ENCODE measurements at regions of chr3 and their contacts with region 1.

Region 1: GRCh38 chr3:170811928-170812591 is 57.9 kb downstream of the RPL22L1 start:
- DNase-seq: peak; percentile 86
- H3K4me3 ChIP-seq: no peak overlapping the region
- H3K27ac ChIP-seq: peak overlapping the region; percentile 51
- H3K4me1 ChIP-seq: peaks cover 35% of the 10 kb centered on the region
- H3K27me3 ChIP-seq: no peaks in the 10 kb centered on the region
- CTCF ChIP-seq: peak; percentile 80 to 92
- POLR2A ChIP-seq: no peak

Region 2: GRCh38 chr3:170307671-170308403 is 504.2 kb before region 1 on chr3:
- CTCF ChIA-PET with region 1: interaction called, 17 read pairs
- POLR2A ChIA-PET with region 1: no interaction called
- dilution Hi-C with region 1: no loop called
- intact Hi-C with region 1: loop called (anchors 1 kb)
- DNase-seq: no peak
- H3K4me3 ChIP-seq: no peak overlapping the region
- H3K27ac ChIP-seq: no peak overlapping the region
- H3K4me1 ChIP-seq: peaks cover 7% of the 10 kb centered on the region
- H3K27me3 ChIP-seq: no peaks in the 10 kb centered on the region
- CTCF ChIP-seq: no peak
- POLR2A ChIP-seq: no peak

Region 3: DNA sequence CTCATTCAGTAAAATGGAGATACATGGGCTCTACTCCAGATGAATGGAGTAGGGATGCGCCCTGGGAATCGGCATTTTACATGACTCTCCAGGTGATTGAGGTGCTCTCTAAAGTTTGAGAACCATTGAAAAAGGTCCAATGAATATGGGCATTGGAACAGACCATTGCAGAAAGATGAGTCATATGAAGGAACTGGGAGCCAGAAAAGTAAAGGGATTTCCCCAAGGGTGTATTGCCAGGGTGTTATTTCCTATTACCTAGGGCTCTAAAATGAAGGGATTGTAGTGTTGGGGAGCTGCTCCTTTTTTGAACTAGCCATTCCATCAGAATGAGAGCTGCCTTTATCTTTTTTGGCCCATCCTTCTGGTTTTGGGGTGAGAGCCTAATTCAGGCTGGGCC is 371.7 kb before region 1 on chr3:
- CTCF ChIA-PET with region 1: interaction called, 25 read pairs
- POLR2A ChIA-PET with region 1: no interaction called
- dilution Hi-C with region 1: loop called (anchors 10 kb)
- intact Hi-C with region 1: no loop called
- DNase-seq: peak; percentile 31
- H3K4me3 ChIP-seq: no peak overlapping the region
- H3K27ac ChIP-seq: no peak overlapping the region
- H3K4me1 ChIP-seq: peaks cover 13% of the 10 kb centered on the region
- H3K27me3 ChIP-seq: no peaks in the 10 kb centered on the region
- CTCF ChIP-seq: no peak
- POLR2A ChIP-seq: no peak

Region 4: DNA sequence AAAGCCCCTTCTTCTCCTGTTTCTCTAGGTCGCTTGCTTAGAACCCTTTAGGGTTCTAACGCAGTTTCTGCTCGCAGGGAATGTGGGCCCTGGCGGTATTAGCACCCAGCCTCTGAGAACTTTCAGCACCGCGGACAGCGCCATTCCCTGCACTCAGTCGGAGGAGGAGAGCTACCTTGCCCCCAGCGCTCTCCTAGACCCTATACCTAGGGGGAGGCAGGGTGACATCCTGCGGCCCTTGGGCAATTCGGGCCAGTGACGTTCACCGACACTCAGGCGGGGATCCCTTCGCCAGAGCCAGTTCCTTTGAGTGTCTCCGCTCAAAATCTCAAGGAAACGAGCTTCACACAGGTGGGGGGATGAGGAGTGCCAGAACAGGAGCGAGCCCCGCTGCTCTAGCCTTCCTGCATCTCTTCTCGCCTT is 227.5 kb before region 1 on chr3:
- CTCF ChIA-PET with region 1: interaction called, 66 read pairs
- POLR2A ChIA-PET with region 1: no interaction called
- dilution Hi-C with region 1: no loop called
- intact Hi-C with region 1: loop called (anchors 10 kb)
- DNase-seq: peak; percentile 56
- H3K4me3 ChIP-seq: peak overlapping the region in 2 of 3 experiments; percentile 34 to 38
- H3K27ac ChIP-seq: no peak overlapping the region
- H3K4me1 ChIP-seq: peaks cover 12% of the 10 kb centered on the region
- H3K27me3 ChIP-seq: peaks cover 25 to 33% of the 10 kb centered on the region in 2 experiments
- CTCF ChIP-seq: no peak
- POLR2A ChIP-seq: no peak

Region 5: GRCh38 chr3:170726976-170727661 is 84.9 kb before region 1 on chr3:
- CTCF ChIA-PET with region 1: interaction called, 12 read pairs
- POLR2A ChIA-PET with region 1: no interaction called
- dilution Hi-C with region 1: no loop called
- intact Hi-C with region 1: no loop called
- DNase-seq: peak; percentile 85
- H3K4me3 ChIP-seq: no peak overlapping the region
- H3K27ac ChIP-seq: peak overlapping the region; percentile 89
- H3K4me1 ChIP-seq: peaks cover 22% of the 10 kb centered on the region
- H3K27me3 ChIP-seq: no peaks in the 10 kb centered on the region
- CTCF ChIP-seq: no peak
- POLR2A ChIP-seq: no peak

Region 6: DNA sequence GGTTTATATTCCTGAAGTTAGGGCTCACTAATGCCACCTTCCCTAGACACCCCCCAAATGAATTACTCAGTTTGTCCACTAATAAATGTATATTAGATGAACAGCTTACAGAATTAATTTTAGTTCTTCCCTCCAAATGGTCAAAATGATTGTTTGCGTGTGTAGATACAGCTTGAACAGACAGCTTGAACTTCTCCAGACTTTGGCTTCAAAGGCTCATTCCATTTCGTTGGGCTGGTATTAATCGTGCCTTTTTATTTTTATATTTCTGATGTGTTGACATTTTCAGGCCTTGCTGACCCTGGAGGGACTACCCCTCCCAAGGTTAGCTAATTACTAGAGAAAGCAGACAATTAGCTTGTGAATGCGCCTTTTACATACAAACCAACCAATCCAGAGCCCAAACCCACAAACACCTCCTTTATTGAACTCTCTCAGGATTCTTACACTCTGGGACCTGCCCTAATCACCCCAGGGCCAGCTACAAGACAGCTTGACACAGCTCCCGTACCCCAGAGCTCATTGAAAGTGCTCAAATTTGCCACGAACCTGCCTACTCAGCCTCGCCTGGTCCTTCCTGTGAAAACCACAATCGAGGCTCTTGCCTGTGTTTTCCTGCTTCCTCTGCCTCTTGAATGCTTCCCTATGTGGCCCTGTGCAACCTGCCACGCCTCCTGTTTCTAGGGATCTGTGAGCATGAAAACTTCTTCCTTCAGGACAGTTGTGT is 17.6 kb after region 1 on chr3:
- CTCF ChIA-PET with region 1: interaction called, 12 read pairs
- POLR2A ChIA-PET with region 1: no interaction called
- dilution Hi-C with region 1: no loop called
- intact Hi-C with region 1: no loop called
- DNase-seq: no peak
- H3K4me3 ChIP-seq: no peak overlapping the region
- H3K27ac ChIP-seq: no peak overlapping the region
- H3K4me1 ChIP-seq: no peaks in the 10 kb centered on the region
- H3K27me3 ChIP-seq: peaks cover 19 to 24% of the 10 kb centered on the region in 2 experiments
- CTCF ChIP-seq: no peak
- POLR2A ChIP-seq: no peak

Measured in endothelial cell of umbilical vein (primary cell).